ENCODE measurements at regions of chr4 and their contacts with region 1.

Region 1: GRCh38 chr4:41281038-41281634 is 24.4 kb downstream of the UCHL1 start:
- DNase-seq: no peak

Region 2: DNA sequence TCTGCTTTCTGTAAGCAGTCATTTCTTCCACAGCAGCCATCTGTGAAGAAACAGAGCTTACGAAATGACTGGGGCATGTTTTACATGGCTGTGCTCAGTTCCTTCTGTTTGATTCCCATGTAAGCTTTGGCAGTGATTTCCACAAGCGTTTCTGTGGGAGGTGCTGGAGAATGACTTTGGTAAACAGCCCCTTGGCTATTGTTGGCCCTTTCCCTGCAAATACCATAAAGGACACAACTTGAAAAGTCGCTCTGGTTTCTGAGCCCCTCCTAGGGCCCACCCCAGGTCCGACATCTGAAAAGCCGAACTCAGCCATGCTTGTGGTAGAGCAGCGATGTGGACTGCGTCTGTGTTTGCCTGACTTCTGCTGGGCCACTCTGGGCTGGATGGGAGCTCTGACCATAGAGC is 260.6 kb after region 1 on chr4:
- intact Hi-C with region 1: no loop called
- DNase-seq: no peak

Region 3: GRCh38 chr4:41644288-41644914 is 363.3 kb after region 1 on chr4:
- intact Hi-C with region 1: loop called (anchors 2 kb)
- DNase-seq: peak; percentile 80

Region 4: GRCh38 chr4:41661442-41662076 is 380.4 kb after region 1 on chr4:
- intact Hi-C with region 1: loop called (anchors 2 kb)
- DNase-seq: no peak

Region 5: GRCh38 chr4:41882625-41883347 is 601.6 kb after region 1 on chr4:
- intact Hi-C with region 1: loop called (anchors 2 kb)
- DNase-seq: no peak

Measured in cardiac septum (tissue), 1 donor.